Mucosa of descending colon (tissue), 3 donors: ENCODE measurements at regions of chr5 and their contacts with region 1.

Region 1: GRCh38 chr5:55407059-55407684 is 99.4 kb downstream of the MTREX start:
- DNase-seq: peak in 1 of 3 donors; percentile 50
- ATAC-seq: peak; percentile 67
- H3K4me3 ChIP-seq: no peak overlapping the region
- H3K4me1 ChIP-seq: peaks cover 7% of the 10 kb centered on the region
- CTCF ChIP-seq: peak; percentile 33

Region 2: DNA sequence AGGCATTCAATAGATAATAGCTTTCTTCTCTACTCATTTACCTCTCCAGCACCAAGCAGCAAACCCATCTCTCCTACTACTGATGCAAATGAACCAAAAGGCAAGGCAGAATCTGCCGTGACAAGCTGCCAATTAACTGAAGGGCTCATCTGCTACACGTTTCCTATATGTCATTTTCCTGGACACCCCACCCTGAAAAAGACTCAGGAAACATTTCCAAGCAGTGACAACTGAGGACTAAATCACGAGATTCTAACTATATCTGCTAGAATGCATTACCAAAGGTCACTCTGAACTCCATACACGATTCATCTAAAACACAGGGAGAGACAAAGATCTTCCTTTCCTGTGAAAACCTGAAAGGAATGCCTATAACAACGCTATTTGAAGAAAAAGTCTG is 114.7 kb after region 1 on chr5:
- intact Hi-C with region 1: loop called in 1 of 2 experiments (anchors 10 kb)
- DNase-seq: no peak
- ATAC-seq: peak; percentile 35
- H3K4me3 ChIP-seq: no peak overlapping the region
- H3K4me1 ChIP-seq: peaks cover 54% of the 10 kb centered on the region
- CTCF ChIP-seq: no peak

Region 3: DNA sequence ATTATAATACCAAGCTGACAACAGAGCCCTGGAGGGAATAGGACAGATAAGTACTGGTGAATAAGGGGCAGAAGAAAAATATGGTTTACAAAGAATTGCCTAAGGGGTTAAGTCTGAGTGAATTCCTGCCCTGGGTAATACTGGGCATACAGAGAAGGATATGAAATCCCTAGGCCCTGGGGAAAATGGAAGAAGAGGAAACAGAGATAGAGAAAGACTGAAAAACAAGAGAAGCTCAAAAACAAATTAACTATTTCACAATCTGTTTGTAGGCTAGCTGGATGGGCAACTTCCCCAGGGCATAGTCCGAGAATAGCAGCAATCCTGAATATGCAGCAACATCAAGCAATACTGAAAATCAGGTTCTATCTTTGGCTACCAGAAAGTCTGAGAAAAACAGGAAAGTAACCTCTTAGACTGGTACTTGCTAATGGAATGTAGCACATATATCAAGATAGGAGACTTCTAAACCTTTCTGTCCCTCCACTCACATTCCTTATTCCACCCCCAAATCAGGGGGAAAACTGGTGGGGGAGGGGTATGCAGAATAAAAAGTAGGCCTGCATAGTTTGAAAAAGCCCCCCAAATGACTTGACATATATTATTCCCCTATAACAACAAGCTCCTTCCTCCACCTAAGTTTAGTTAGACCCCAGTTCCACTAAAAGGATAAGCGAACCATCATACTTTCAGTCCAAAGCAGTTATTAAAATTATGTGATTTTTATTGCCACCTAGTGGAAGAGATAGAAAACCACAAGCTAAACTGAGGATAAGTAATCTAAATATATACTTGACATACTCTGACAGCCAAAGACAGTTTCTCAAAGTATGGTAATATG is 284.3 kb after region 1 on chr5:
- intact Hi-C with region 1: loop called (anchors 5 kb)
- DNase-seq: no peak
- ATAC-seq: peak; percentile 67
- H3K4me3 ChIP-seq: no peak overlapping the region
- H3K4me1 ChIP-seq: peaks cover 4% of the 10 kb centered on the region
- CTCF ChIP-seq: no peak